Sigmoid colon (tissue), 7 donors: ENCODE measurements at regions of chr2 and their contacts with region 1.

Region 1: GRCh38 chr2:132547074-132547687 is 122.8 kb downstream of the LYPD1 start:
- DNase-seq: peak; percentile 77
- H3K4me3 ChIP-seq: no peak overlapping the region
- H3K27ac ChIP-seq: no peak overlapping the region
- H3K4me1 ChIP-seq: peaks cover 0 to 15% (median 9%) of the 10 kb centered on the region in 4 donors
- H3K27me3 ChIP-seq: no peaks in the 10 kb centered on the region
- CTCF ChIP-seq: peak; percentile 50 to 65 (median 58)
- EP300 ChIP-seq: no peak
- POLR2A ChIP-seq: no peak

Region 2: GRCh38 chr2:133171393-133172004 is 624.3 kb after region 1 on chr2:
- intact Hi-C with region 1: loop called (anchors 1 kb)
- DNase-seq: no peak
- H3K4me3 ChIP-seq: no peak overlapping the region
- H3K27ac ChIP-seq: no peak overlapping the region
- H3K4me1 ChIP-seq: no peaks in the 10 kb centered on the region
- H3K27me3 ChIP-seq: no peaks in the 10 kb centered on the region
- CTCF ChIP-seq: peak in 3 of 4 experiments; percentile 38 to 58 (median 53)
- EP300 ChIP-seq: no peak
- POLR2A ChIP-seq: no peak

Region 3: DNA sequence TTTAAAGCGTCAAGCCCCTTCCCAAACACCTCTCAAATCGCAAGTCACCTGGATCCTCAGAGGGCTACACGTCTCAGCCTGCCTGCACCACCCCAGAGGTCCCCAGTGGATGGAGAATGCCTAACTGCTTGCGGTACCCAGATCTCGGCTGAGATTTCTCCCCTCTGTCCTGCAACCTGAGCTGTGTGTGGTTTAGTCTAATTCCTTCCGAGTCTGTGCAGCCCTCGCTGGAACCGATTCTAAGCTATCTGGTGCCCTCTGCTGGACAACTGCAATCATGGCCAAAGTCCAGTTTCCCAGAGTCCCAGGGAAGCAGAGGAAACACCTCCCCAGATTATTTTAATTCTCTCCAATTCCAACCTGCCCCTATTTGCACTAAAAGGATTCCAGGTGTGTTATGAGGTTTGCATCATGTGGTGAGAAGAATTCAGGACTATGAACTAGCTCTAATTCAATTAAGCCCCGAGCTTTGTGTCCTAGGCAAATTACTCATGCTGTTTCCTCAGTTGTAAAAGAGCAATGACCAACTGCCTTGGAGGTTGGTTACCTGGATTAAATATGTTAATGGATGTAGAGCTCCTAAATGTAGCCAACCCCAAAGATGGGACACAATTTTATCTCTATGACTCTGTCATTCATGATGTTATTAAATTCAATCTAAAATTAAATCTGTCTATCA is 1297.2 kb after region 1 on chr2:
- intact Hi-C with region 1: loop called (anchors 1 kb)
- DNase-seq: peak; percentile 76
- H3K4me3 ChIP-seq: no peak overlapping the region
- H3K27ac ChIP-seq: no peak overlapping the region
- H3K4me1 ChIP-seq: no peaks in the 10 kb centered on the region
- H3K27me3 ChIP-seq: no peaks in the 10 kb centered on the region
- CTCF ChIP-seq: peak; percentile 55 to 83 (median 66)
- EP300 ChIP-seq: no peak
- POLR2A ChIP-seq: no peak